Activated CD4-positive, alpha-beta T cell treated with anti-CD3 and anti-CD28 coated beads, Interleukin-2, amount 10 ng/mL, durations not matched to agents 24 days and 14 days (primary cell): ENCODE measurements at regions of chr3 and their contacts with region 1.

Region 1: GRCh38 chr3:170869645-170870593 is at the start of gene RPL22L1:
- DNase-seq: peak; percentile 98
- H3K4me3 Mint-ChIP-seq: peak within 1 kb of the TSS; percentile 92
- H3K27ac Mint-ChIP-seq: peak within 1 kb of the TSS; percentile 96
- H3K4me1 Mint-ChIP-seq: peaks cover 18% of the 10 kb centered on the region
- H3K27me3 Mint-ChIP-seq: no peaks in the 10 kb centered on the region
- total RNA-seq, gene RPL22L1: 157 TPM in 2 replicates

Region 2: GRCh38 chr3:170908235-170909116 is 38.6 kb after region 1 on chr3 and contains the start of gene EIF5A2:
- intact Hi-C with region 1: loop called (anchors 1 kb)
- DNase-seq: peak; percentile 97
- H3K4me3 Mint-ChIP-seq: peak within 1 kb of the TSS; percentile 99
- H3K27ac Mint-ChIP-seq: peak within 1 kb of the TSS; percentile 95
- H3K4me1 Mint-ChIP-seq: peaks cover 19% of the 10 kb centered on the region
- H3K27me3 Mint-ChIP-seq: peaks cover 15% of the 10 kb centered on the region
- total RNA-seq, gene EIF5A2: 8.7 and 9.7 TPM in 2 replicates

Region 3: GRCh38 chr3:171206283-171206682 is 336.4 kb after region 1 on chr3:
- intact Hi-C with region 1: no loop called
- DNase-seq: peak; percentile 44
- H3K4me3 Mint-ChIP-seq: no peak overlapping the region
- H3K27ac Mint-ChIP-seq: no peak overlapping the region
- H3K4me1 Mint-ChIP-seq: peaks cover 6% of the 10 kb centered on the region
- H3K27me3 Mint-ChIP-seq: no peaks in the 10 kb centered on the region

Region 4: GRCh38 chr3:171428321-171428787 is 558.4 kb after region 1 on chr3:
- intact Hi-C with region 1: no loop called
- DNase-seq: no peak
- H3K4me3 Mint-ChIP-seq: no peak overlapping the region
- H3K27ac Mint-ChIP-seq: no peak overlapping the region
- H3K4me1 Mint-ChIP-seq: peaks cover 2% of the 10 kb centered on the region
- H3K27me3 Mint-ChIP-seq: no peaks in the 10 kb centered on the region